Activated CD8-positive, alpha-beta T cell treated with anti-CD3 and anti-CD28 coated beads, Interleukin-2, amount 10 ng/mL, durations not matched to agents 7 days and 5 days (primary cell): ENCODE measurements at regions of chr6 and their contacts with region 1.

Region 1: DNA sequence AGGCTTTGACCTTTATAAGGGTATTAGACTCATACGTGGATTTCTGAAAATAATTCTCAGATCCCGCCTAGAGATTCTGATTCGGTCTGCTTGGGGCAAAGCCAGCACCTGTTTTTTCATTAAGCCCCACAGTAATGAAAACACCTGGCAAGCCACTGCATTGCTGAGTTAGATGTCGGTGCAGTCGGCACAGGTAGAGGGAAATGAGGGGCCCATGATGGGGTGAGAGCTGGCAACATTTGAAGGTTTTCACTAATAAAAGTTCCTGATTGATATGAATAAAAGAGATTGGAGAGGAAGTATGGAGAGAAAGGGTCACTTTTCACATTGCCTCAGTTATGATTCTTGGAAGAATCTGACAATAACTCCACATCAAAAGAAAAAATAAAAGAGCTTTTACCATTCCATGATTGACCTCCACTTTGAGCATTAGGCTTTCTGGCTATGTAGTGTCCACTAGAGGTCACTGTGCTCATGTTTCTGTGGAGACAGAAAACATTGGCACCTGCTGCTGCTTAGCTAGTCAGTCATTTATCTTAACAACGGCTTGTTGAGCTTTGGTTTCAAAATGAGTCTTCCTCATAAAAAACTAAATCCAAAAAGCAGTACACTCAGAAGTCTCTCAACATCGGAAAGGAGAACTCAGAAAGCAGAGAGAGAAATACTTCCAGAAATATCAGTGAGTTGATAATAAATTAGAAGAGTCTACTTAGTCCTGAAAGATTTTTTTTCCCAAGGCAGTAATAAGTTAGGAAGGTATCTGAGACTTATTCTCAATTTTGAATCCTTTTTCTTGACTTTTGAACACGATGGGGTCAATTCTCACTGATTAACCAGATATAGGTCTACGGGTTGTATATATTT is 53.3 kb upstream of the KLHL31 start:
- DNase-seq: peak; percentile 64
- ATAC-seq: peak; percentile 88
- H3K4me3 Mint-ChIP-seq: no peak overlapping the region
- H3K27ac Mint-ChIP-seq: no peak overlapping the region
- H3K4me1 Mint-ChIP-seq: peaks cover 9% of the 10 kb centered on the region
- H3K27me3 Mint-ChIP-seq: peaks cover 28% of the 10 kb centered on the region

Region 2: GRCh38 chr6:53375847-53376246 is 343.0 kb before region 1 on chr6:
- CTCF ChIA-PET with region 1: no interaction called
- POLR2A ChIA-PET with region 1: no interaction called
- DNase-seq: no peak
- ATAC-seq: no peak
- H3K4me3 Mint-ChIP-seq: no peak overlapping the region
- H3K27ac Mint-ChIP-seq: no peak overlapping the region
- H3K4me1 Mint-ChIP-seq: no peaks in the 10 kb centered on the region
- H3K27me3 Mint-ChIP-seq: peaks cover 28% of the 10 kb centered on the region

Region 3: GRCh38 chr6:53437557-53438202 is 281.1 kb before region 1 on chr6:
- CTCF ChIA-PET with region 1: no interaction called
- POLR2A ChIA-PET with region 1: no interaction called
- DNase-seq: peak; percentile 30
- ATAC-seq: peak; percentile 58
- H3K4me3 Mint-ChIP-seq: no peak overlapping the region
- H3K27ac Mint-ChIP-seq: no peak overlapping the region
- H3K4me1 Mint-ChIP-seq: no peaks in the 10 kb centered on the region
- H3K27me3 Mint-ChIP-seq: peaks cover 9% of the 10 kb centered on the region

Region 4: GRCh38 chr6:53651764-53652401 is 66.9 kb before region 1 on chr6:
- CTCF ChIA-PET with region 1: interaction called, 14 read pairs
- POLR2A ChIA-PET with region 1: no interaction called
- DNase-seq: peak; percentile 82
- ATAC-seq: peak; percentile 93
- H3K4me3 Mint-ChIP-seq: peak overlapping the region; percentile 89
- H3K27ac Mint-ChIP-seq: peak overlapping the region; percentile 87
- H3K4me1 Mint-ChIP-seq: peaks cover 38% of the 10 kb centered on the region
- H3K27me3 Mint-ChIP-seq: peaks cover 7% of the 10 kb centered on the region

Region 5: DNA sequence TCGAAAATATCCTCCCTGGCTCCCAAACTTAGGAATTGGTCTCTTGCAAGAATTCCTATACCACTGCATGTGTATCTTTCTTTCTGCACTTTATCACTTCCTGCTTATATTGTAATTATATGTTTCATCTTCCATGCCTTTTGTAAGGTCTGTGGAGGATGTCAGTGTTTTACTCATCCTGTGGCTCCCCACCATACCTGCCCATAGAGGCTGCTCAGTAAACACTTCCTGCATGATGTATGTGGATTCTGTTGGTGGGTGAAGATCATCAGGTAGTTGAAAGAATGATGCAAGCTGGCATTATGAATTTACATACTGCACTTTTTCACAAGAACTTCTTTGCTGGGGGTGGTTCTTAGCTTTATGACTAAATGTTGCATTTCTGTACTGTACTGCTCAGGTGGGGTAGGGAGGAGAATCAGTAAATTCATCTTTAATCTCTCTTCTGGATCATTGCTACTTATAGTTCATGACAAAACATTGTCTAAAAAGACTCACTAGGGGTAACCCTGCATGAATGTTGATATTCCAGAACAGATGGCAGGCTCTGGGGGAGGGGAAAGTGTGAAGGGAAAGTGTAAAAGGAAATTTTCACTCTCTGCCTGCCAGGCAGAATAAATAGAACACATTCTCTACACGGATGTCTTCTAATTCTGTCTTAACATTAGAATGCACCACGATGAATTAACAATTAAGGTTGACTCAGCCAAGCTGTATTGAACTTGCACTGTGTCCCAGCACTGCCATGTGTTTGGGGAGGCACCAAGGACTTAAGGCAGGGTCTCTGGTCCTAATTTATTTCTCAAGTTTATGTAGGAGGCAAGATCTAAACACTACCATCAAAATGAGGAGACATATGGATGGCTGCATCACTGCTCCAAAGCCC is 17.3 kb before region 1 on chr6:
- CTCF ChIA-PET with region 1: interaction called, 39 read pairs
- POLR2A ChIA-PET with region 1: no interaction called
- DNase-seq: peak; percentile 47
- ATAC-seq: peak; percentile 82
- H3K4me3 Mint-ChIP-seq: no peak overlapping the region
- H3K27ac Mint-ChIP-seq: peak overlapping the region; percentile 67
- H3K4me1 Mint-ChIP-seq: peaks cover 21% of the 10 kb centered on the region
- H3K27me3 Mint-ChIP-seq: peaks cover 4% of the 10 kb centered on the region

Region 6: DNA sequence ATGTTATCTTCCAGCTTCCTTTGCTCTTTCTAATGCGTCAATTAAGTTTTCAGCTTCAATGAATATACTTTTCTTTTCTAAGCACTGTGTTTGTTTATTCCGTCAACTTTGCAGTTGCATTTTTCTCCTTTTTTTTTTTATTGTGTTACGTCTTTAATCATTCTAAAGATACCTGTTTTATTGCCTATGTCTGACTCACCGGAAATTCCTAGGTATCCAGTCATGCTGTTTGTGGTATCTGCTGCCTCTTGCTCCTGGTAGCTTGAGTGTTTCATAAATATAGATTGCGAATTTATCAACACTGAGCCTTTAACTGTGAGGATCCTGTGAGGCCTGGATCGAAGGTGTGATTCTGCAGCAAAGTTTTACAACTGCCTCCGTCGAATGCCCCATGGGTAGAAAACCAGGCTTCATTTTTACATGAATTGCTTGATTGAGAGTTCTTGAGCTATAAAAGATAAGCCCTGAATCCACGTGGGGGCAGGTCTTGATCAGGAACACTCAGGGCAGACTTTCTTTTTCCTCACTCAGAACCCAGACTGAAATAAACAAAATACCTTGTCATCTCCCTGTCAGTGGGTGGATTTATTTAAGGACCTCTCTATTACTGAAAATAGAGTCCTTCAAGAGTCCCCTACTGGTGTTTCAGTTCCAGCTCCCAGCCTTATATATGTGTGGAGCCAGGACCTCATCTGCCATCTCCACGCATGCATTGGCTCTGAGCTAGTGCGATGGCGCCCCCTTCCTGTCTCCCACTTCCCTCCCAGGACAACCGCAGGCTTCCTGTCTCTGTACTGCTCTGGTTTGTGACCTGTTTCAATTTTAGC is 15.9 kb after region 1 on chr6:
- CTCF ChIA-PET with region 1: interaction called, 125 read pairs
- POLR2A ChIA-PET with region 1: no interaction called
- DNase-seq: peak; percentile 67
- ATAC-seq: peak; percentile 59
- H3K4me3 Mint-ChIP-seq: peak overlapping the region; percentile 43
- H3K27ac Mint-ChIP-seq: peak overlapping the region; percentile 58
- H3K4me1 Mint-ChIP-seq: peaks cover 59% of the 10 kb centered on the region
- H3K27me3 Mint-ChIP-seq: no peaks in the 10 kb centered on the region

Region 7: DNA sequence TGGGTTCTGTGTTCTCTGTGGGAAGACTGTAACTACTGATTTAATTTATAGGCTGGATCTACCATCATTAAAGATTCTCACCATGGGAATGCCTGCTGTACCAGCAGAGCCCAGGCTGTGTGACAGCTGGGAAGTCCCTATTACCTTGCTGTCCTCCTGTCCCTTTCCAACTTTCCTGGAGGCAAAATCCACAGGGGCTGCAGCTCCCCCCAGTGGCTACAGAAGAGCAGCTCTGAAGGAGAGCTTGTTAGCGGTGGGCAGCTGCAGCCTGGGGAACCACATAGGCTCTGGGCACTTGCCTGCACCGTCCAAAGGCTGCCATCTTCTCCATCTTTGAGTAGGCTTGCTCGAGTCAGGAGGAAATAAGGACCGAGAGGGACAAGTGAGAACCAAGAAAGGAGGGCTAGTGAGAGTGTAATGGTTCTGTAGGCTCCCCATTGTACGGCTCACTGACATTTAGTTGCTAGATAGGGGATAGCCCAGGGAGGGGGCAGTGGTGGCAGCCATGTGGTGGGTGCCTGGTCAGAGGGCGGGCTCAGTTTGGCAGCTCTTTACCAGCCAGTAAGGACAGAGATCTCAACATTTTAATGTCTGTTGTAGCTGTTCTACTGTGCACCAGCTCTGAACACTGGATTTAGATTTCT is 237.4 kb after region 1 on chr6:
- CTCF ChIA-PET with region 1: interaction called, 12 read pairs
- POLR2A ChIA-PET with region 1: no interaction called
- DNase-seq: peak; percentile 35
- ATAC-seq: no peak
- H3K4me3 Mint-ChIP-seq: no peak overlapping the region
- H3K27ac Mint-ChIP-seq: no peak overlapping the region
- H3K4me1 Mint-ChIP-seq: no peaks in the 10 kb centered on the region
- H3K27me3 Mint-ChIP-seq: peaks cover 15% of the 10 kb centered on the region